Psoas muscle (tissue), 8 donors: ENCODE measurements at regions of chr17 and their contacts with region 1.

Region 1: GRCh38 chr17:6823011-6823442 is 8.5 kb downstream of the TEKT1 start:
- DNase-seq: no peak
- ATAC-seq: no peak
- H3K4me3 ChIP-seq: no peak overlapping the region
- H3K27ac ChIP-seq: no peak overlapping the region
- H3K4me1 ChIP-seq: no peaks in the 10 kb centered on the region
- H3K27me3 ChIP-seq: peaks cover 0 to 18% (median 0%) of the 10 kb centered on the region in 3 donors
- CTCF ChIP-seq: no peak

Region 2: DNA sequence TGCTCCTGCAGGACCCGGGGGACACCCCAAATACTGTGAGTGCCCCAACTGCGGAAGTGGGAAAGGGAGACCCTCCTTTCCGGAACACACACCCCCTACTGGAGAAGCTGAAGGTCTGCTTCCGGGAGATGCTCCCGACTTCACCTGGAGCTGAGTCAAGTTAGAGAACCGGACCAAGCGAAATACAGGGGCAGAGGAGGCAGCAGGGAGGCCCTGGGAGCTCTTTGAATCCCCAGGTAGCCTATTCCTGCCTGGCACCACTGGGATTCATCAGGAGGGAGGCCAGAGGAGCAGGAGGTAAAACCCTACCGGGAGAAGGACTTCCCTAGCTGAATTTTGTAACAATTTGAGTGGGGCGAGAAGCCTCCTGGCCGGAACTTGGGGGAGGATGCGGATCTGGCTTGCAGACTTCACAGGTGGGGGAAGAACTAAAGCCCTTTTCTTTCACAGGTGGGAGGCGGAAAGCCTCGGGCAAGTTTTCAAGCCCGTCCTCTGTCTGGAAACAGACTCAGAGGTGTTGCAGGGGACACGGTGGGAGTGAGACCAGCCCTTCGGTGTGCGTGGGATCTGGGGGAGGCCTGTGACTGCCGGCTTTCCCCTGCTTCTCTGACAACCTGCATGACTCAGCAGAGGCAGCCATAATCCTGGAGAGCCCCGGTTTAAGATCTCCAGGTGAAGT is 30.9 kb after region 1 on chr17:
- intact Hi-C with region 1: no loop called
- DNase-seq: no peak
- ATAC-seq: no peak
- H3K4me3 ChIP-seq: no peak overlapping the region
- H3K27ac ChIP-seq: no peak overlapping the region
- H3K4me1 ChIP-seq: no peaks in the 10 kb centered on the region
- H3K27me3 ChIP-seq: peaks cover 0 to 27% (median 5%) of the 10 kb centered on the region in 3 donors
- CTCF ChIP-seq: no peak

Region 3: GRCh38 chr17:6894206-6894528 is 71.1 kb after region 1 on chr17:
- intact Hi-C with region 1: loop called in 1 of 2 experiments (anchors 10 kb)
- DNase-seq: no peak
- ATAC-seq: no peak
- H3K4me3 ChIP-seq: no peak overlapping the region
- H3K27ac ChIP-seq: no peak overlapping the region
- H3K4me1 ChIP-seq: no peaks in the 10 kb centered on the region
- H3K27me3 ChIP-seq: peaks cover 0 to 42% (median 11%) of the 10 kb centered on the region in 3 donors
- CTCF ChIP-seq: peak; percentile 24